ENCODE measurements at regions of chr15 and their contacts with region 1.

Region 1: GRCh38 chr15:28994831-28995596 is 109.2 kb downstream of the APBA2 start:
- DNase-seq: no peak
- ATAC-seq: no peak
- H3K4me3 ChIP-seq: no peak overlapping the region
- H3K27ac ChIP-seq: no peak overlapping the region
- H3K4me1 ChIP-seq: no peaks in the 10 kb centered on the region
- H3K27me3 ChIP-seq: no peaks in the 10 kb centered on the region
- CTCF ChIP-seq: no peak
- POLR2A ChIP-seq: no peak
- RAD21 ChIP-seq: no peak

Region 2: GRCh38 chr15:29090617-29091466 is 95.8 kb after region 1 on chr15:
- CTCF ChIA-PET with region 1: no interaction called
- POLR2A ChIA-PET with region 1: no interaction called
- RAD21 ChIA-PET with region 1: no interaction called
- intact Hi-C with region 1: loop called (anchors 5 kb)
- DNase-seq: peak; percentile 12
- ATAC-seq: peak; percentile 91
- H3K4me3 ChIP-seq: no peak overlapping the region
- H3K27ac ChIP-seq: no peak overlapping the region
- H3K4me1 ChIP-seq: no peaks in the 10 kb centered on the region
- H3K27me3 ChIP-seq: no peaks in the 10 kb centered on the region
- CTCF ChIP-seq: peak; percentile 23 to 97 (median 89); a peak in 5 of 6 replicates
- POLR2A ChIP-seq: no peak
- RAD21 ChIP-seq: peak; percentile 40; the same call in 1 of the 2 replicates

Region 3: GRCh38 chr15:29102912-29103823 is 108.2 kb after region 1 on chr15:
- CTCF ChIA-PET with region 1: interaction called, 10 read pairs
- POLR2A ChIA-PET with region 1: no interaction called
- RAD21 ChIA-PET with region 1: no interaction called
- intact Hi-C with region 1: no loop called
- DNase-seq: no peak
- ATAC-seq: no peak
- H3K4me3 ChIP-seq: no peak overlapping the region
- H3K27ac ChIP-seq: no peak overlapping the region
- H3K4me1 ChIP-seq: peaks cover 0 to 3% of the 10 kb centered on the region in 2 experiments; a peak in 2 of 4 replicates
- H3K27me3 ChIP-seq: no peaks in the 10 kb centered on the region
- CTCF ChIP-seq: no peak
- POLR2A ChIP-seq: no peak
- RAD21 ChIP-seq: no peak

Region 4: DNA sequence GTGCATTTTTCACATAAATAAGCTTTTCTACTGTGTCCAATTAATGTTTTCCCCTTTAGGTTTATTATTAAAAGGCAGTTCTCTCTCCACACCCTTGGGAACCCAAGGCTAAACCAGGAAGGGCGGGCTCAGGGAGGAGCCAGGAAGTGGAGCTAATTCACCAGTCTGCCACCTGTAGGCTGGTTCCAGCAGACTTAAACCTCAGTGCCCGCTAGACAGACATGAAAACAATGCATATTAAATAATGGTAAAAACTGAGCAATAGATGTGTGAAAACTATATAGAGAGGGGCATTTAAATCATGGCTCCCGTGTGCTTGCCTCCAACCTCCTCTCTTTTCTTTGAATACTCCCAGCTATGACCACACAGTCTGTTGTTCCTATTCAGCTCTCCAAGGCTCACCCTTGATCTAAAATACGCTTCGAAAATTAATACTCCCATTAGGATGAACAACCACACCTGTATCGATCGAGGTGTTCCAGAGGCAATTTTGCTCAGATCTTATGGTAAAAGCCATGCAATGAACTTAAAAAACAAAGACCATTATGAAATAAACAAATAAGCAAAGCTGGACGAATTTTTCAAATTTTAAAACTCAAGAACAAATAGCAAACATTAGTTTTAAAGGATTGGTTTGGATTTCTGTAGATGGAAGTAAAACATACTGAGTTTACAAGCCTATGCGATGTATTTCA is 574.0 kb after region 1 on chr15:
- CTCF ChIA-PET with region 1: no interaction called
- POLR2A ChIA-PET with region 1: no interaction called
- RAD21 ChIA-PET with region 1: no interaction called
- intact Hi-C with region 1: loop called (anchors 10 kb)
- DNase-seq: peak; percentile 38
- ATAC-seq: peak; percentile 100
- H3K4me3 ChIP-seq: no peak overlapping the region
- H3K27ac ChIP-seq: no peak overlapping the region
- H3K4me1 ChIP-seq: peaks cover 7% of the 10 kb centered on the region in 2 experiments; a peak in 3 of 4 replicates
- H3K27me3 ChIP-seq: peaks cover 9% of the 10 kb centered on the region; the same call in 1 of the 2 replicates
- CTCF ChIP-seq: peak; percentile 21 to 61 (median 53); a peak in 4 of 6 replicates
- POLR2A ChIP-seq: no peak
- RAD21 ChIP-seq: peak; percentile 19; the same call in 1 of the 2 replicates